ENCODE measurements at regions of chr19 and their contacts with region 1.

Region 1: GRCh38 chr19:12796146-12797071 is 5.1 kb downstream of the JUNB start:
- DNase-seq: peak; percentile 75
- H3K4me3 Mint-ChIP-seq: peak overlapping the region; percentile 72
- H3K27ac Mint-ChIP-seq: peak overlapping the region; percentile 88
- H3K4me1 Mint-ChIP-seq: peaks cover 35% of the 10 kb centered on the region
- H3K27me3 Mint-ChIP-seq: no peaks in the 10 kb centered on the region

Region 2: GRCh38 chr19:12745166-12745897 is 51.1 kb before region 1 on chr19:
- intact Hi-C with region 1: no loop called
- DNase-seq: no peak
- H3K4me3 Mint-ChIP-seq: no peak overlapping the region
- H3K27ac Mint-ChIP-seq: no peak overlapping the region
- H3K4me1 Mint-ChIP-seq: no peaks in the 10 kb centered on the region
- H3K27me3 Mint-ChIP-seq: no peaks in the 10 kb centered on the region

Region 3: GRCh38 chr19:12757544-12758274 is 38.7 kb before region 1 on chr19:
- intact Hi-C with region 1: loop called (anchors 1 kb)
- DNase-seq: peak; percentile 68
- H3K4me3 Mint-ChIP-seq: peak overlapping the region; percentile 53
- H3K27ac Mint-ChIP-seq: no peak overlapping the region
- H3K4me1 Mint-ChIP-seq: peaks cover 5% of the 10 kb centered on the region
- H3K27me3 Mint-ChIP-seq: peaks cover 8% of the 10 kb centered on the region

Region 4: DNA sequence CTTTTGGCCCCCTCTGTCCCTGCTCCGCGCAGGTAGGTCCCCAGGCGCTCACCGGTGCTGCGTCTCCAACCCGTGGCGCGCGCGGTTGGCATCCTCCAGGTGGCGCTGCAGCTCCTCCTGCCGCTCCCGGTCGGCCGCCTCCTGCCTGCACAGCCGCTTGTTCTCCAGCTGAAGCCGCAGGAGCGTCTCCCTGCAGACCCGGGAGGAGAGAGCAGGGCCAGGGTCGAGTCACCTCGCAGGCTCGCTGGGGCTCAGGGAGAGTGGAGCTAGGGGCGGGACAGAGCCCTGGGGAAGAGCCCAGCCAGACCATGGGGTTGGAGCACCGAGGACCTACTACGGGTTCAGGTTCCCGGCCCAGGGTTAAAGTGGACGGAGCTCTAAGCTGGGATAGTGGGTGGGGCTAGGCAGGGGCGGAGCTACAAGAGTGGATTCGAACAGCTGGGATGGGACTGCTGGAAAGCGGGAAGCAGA is 30.3 kb before region 1 on chr19:
- intact Hi-C with region 1: loop called (anchors 1 kb)
- DNase-seq: peak; percentile 78
- H3K4me3 Mint-ChIP-seq: peak overlapping the region; percentile 51
- H3K27ac Mint-ChIP-seq: no peak overlapping the region
- H3K4me1 Mint-ChIP-seq: no peaks in the 10 kb centered on the region
- H3K27me3 Mint-ChIP-seq: no peaks in the 10 kb centered on the region

Region 5: DNA sequence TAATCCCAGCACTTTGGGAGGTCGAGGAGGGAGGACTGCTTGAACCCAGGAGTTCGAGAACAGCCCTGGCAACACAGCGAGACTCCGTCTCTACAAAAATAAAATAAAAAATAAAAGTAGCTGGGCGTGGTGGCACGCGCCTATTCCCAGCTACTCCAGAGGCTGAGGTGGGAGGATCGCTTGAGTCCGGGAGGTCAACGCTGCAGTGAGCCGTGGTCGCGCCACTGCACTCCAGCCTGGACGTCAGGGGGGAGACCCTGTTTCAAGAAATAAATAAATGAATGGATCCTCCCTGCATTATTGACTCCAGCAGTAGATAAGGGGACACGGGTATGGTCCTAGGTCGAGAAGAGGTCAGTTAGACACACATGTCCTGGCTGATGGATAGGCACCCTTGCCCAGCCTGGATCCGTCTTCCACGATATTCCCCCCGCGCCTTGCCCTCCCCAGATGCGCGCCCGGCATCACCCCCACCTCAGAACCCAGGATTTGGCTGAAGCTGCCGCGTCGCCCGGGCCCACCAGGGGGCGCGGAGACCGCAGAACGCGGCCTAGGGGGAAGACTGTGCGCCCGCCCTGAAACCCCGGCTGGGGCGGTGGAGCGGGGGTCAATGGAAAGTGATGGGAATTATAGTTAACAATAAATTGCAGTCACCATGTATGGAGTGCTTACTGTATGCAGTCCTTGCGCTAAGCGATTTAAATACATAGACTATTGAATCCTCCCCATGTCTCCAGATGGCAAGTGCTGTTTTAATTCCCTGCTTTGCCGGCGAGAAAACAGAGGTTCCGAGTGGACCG is 19.0 kb before region 1 on chr19:
- intact Hi-C with region 1: loop called (anchors 1 kb)
- DNase-seq: peak; percentile 78
- H3K4me3 Mint-ChIP-seq: peak overlapping the region; percentile 86
- H3K27ac Mint-ChIP-seq: peak overlapping the region; percentile 86
- H3K4me1 Mint-ChIP-seq: peaks cover 44% of the 10 kb centered on the region
- H3K27me3 Mint-ChIP-seq: no peaks in the 10 kb centered on the region

Region 6: DNA sequence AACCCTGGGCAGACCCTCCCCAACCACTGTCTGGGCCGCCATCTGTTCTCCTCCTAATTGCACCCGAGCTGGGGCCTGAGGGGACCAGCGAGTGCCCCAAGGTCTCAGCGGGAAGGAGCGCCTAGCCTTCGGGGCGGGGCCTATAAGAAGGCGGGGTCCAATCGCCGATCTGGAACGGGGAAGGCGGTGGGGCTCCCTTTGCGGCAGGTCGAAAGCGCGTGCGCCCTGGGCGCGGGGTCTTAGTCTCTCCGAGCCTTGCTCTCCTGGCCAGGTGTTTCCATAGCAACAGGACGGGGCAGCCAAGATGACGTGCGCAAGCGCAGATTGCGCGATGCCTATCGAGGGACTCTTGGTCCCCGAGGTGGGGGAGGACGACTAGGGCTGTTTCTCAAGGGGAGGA is 44.7 kb after region 1 on chr19:
- intact Hi-C with region 1: no loop called
- DNase-seq: no peak
- H3K4me3 Mint-ChIP-seq: peak overlapping the region; percentile 20
- H3K27ac Mint-ChIP-seq: no peak overlapping the region
- H3K4me1 Mint-ChIP-seq: peaks cover 24% of the 10 kb centered on the region
- H3K27me3 Mint-ChIP-seq: peaks cover 49% of the 10 kb centered on the region

Measured in activated T-helper 1 cell treated with anti-CD3 and anti-CD28 coated beads, Interleukin-12 subunit alpha, Interleukin-12 subunit beta, Interleukin-2, Interleukin-4 antibody, amounts not matched to agents 30 ng/mL and 10 ng/mL and 1 ng/mL, durations not matched to agents 14 hours and 24 hours and 36 hours (primary cell).